Activated naive CD8-positive, alpha-beta T cell treated with anti-CD3 and anti-CD28 coated beads, Interleukin-2, amount 10 ng/mL, durations not matched to agents 7 days and 5 days (primary cell): ENCODE measurements at regions of chr11 and their contacts with region 1.

Region 1: DNA sequence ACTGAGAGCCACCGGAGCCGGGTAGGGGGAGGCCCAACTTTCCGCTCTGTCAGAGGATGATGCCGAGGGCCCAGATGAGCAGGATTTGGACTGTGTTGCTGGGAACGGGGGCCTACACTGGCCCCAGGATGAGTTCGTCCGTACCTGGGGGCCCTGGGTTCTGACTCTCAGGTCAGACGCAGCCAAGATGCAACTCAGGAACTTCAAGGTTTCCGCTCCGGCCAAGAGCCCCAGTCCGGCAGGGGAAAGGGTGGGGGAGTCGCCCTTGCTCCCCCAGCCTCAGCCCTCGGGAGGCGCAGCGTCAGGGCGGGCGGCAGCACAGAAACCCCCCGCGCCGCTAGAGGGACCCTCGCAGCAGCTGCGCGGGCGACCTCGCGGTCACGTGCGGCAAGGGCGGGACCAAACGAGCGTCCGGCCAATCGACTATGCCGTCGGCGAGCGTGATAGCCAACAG is 241 bp upstream of the ARL2 start:
- DNase-seq: peak; percentile 90
- ATAC-seq: peak; percentile 86
- H3K4me3 Mint-ChIP-seq: peak overlapping the region; percentile 91
- H3K27ac Mint-ChIP-seq: peak overlapping the region; percentile 98
- H3K4me1 Mint-ChIP-seq: peaks cover 20% of the 10 kb centered on the region
- H3K27me3 Mint-ChIP-seq: no peaks in the 10 kb centered on the region

Region 2: DNA sequence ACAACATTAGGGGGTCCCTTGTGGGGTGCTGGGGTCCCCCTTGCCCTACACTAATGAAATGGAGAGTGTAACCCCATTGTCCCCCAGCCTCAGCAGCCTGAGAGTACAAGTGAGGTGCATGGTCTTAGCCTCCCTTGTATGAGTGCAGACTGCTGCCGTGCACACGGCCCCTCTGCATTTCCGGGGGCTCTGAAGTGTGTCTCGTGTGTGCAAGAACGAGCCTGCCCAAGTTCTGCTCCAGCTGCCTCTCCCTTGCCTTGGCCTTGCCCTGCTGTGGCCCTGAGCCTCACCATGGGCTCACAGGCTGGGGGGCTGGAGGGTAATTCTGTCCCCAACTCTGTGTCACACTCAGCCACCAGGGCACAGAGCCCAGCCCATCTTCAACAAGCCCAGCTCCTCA is 130.1 kb before region 1 on chr11:
- POLR2A ChIA-PET with region 1: no interaction called
- DNase-seq: no peak
- ATAC-seq: no peak
- H3K4me3 Mint-ChIP-seq: no peak overlapping the region
- H3K27ac Mint-ChIP-seq: peak overlapping the region; percentile 71
- H3K4me1 Mint-ChIP-seq: peaks cover 44% of the 10 kb centered on the region
- H3K27me3 Mint-ChIP-seq: no peaks in the 10 kb centered on the region

Region 3: GRCh38 chr11:65027213-65028067 is 13.7 kb after region 1 on chr11 and contains the start of gene SNX15:
- POLR2A ChIA-PET with region 1: interaction called, 10 read pairs
- DNase-seq: peak; percentile 85
- ATAC-seq: peak; percentile 89
- H3K4me3 Mint-ChIP-seq: peak within 1 kb of the TSS; percentile 81
- H3K27ac Mint-ChIP-seq: peak within 1 kb of the TSS; percentile 82
- H3K4me1 Mint-ChIP-seq: peaks cover 20% of the 10 kb centered on the region
- H3K27me3 Mint-ChIP-seq: no peaks in the 10 kb centered on the region
- total RNA-seq, gene SNX15: 22.4 to 28.3 TPM

Region 4: DNA sequence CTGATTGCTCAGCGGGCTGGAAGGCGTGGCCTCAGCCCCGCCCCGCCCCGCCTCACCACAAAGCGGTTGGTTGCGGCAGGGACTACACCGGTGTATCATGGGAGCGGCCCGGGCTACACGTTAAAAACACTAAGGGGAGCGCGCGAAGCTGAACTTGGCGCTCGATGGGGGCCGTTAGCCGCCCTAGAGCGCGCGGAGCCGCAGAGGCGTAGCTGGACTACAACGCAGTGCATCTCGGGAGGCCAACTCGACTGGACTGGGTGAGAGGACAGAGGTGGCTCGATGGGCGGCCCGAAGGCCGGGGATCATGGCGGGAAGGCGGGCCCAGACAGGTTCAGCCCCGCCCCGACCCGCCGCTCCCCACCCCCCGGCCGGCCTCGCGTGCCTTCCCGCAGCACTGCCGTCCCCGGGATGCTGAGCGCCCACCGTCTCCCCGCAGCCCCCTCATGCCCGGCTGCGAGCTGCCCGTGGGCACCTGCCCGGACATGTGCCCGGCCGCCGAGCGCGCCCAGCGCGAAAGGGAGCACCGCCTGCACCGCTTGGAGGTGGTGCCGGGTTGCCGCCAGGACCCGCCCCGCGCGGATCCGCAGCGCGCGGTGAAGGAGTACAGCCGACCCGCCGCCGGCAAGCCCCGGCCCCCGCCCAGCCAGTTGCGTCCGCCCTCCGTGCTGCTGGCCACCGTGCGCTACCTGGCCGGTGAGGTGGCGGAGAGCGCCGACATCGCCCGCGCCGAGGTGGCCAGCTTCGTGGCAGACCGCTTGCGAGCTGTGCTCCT is 27.3 kb after region 1 on chr11 and contains the start of gene SAC3D1:
- POLR2A ChIA-PET with region 1: interaction called, 22 read pairs
- DNase-seq: peak; percentile 93
- ATAC-seq: peak; percentile 95
- H3K4me3 Mint-ChIP-seq: peak within 1 kb of the TSS; percentile 91
- H3K27ac Mint-ChIP-seq: peak within 1 kb of the TSS; percentile 96
- H3K4me1 Mint-ChIP-seq: peaks cover 15% of the 10 kb centered on the region
- H3K27me3 Mint-ChIP-seq: no peaks in the 10 kb centered on the region
- total RNA-seq, gene SAC3D1: 24.2 to 25.8 TPM

Region 5: GRCh38 chr11:65111744-65112414 is 98.2 kb after region 1 on chr11 and contains the start of gene TM7SF2:
- POLR2A ChIA-PET with region 1: interaction called, 16 read pairs
- DNase-seq: peak; percentile 95
- ATAC-seq: peak; percentile 75
- H3K4me3 Mint-ChIP-seq: peak within 1 kb of the TSS; percentile 88
- H3K27ac Mint-ChIP-seq: peak within 1 kb of the TSS; percentile 91
- H3K4me1 Mint-ChIP-seq: peaks cover 30% of the 10 kb centered on the region
- H3K27me3 Mint-ChIP-seq: no peaks in the 10 kb centered on the region
- total RNA-seq, gene TM7SF2: 26.1 to 26.2 TPM